ENCODE measurements at regions of chr12 and their contacts with region 1.

Region 1: GRCh38 chr12:131132118-131132892 is 178.6 kb downstream of the ADGRD1 start:
- DNase-seq: no peak
- ATAC-seq: peak; percentile 97
- H3K4me3 ChIP-seq: no peak overlapping the region
- H3K27ac ChIP-seq: no peak overlapping the region
- H3K4me1 ChIP-seq: no peaks in the 10 kb centered on the region
- H3K27me3 ChIP-seq: no peaks in the 10 kb centered on the region
- CTCF ChIP-seq: peak; percentile 81 to 84 (median 83)
- EP300 ChIP-seq: no peak
- POLR2A ChIP-seq: no peak
- RAD21 ChIP-seq: peak; percentile 79

Region 2: GRCh38 chr12:130357241-130357640 is 775.1 kb before region 1 on chr12:
- CTCF ChIA-PET with region 1: no interaction called
- POLR2A ChIA-PET with region 1: no interaction called
- RAD21 ChIA-PET with region 1: no interaction called
- SMC1A ChIA-PET with region 1: no interaction called
- in situ Hi-C with region 1: no loop called
- intact Hi-C with region 1: no loop called
- DNase-seq: no peak
- ATAC-seq: no peak
- H3K4me3 ChIP-seq: no peak overlapping the region
- H3K27ac ChIP-seq: no peak overlapping the region
- H3K4me1 ChIP-seq: no peaks in the 10 kb centered on the region
- H3K27me3 ChIP-seq: no peaks in the 10 kb centered on the region
- CTCF ChIP-seq: no peak
- EP300 ChIP-seq: no peak
- POLR2A ChIP-seq: no peak
- RAD21 ChIP-seq: no peak

Region 3: GRCh38 chr12:130761537-130762318 is 370.6 kb before region 1 on chr12:
- CTCF ChIA-PET with region 1: no interaction called
- POLR2A ChIA-PET with region 1: no interaction called
- RAD21 ChIA-PET with region 1: no interaction called
- SMC1A ChIA-PET with region 1: no interaction called
- in situ Hi-C with region 1: no loop called
- intact Hi-C with region 1: loop called (anchors 5 kb)
- DNase-seq: no peak
- ATAC-seq: peak; percentile 90
- H3K4me3 ChIP-seq: 0 out of 2 replicates have a peak overlapping the region, but pooled peaks have one; percentile 9
- H3K27ac ChIP-seq: no peak overlapping the region
- H3K4me1 ChIP-seq: no peaks in the 10 kb centered on the region; the same call in 1 of the 2 replicates
- H3K27me3 ChIP-seq: no peaks in the 10 kb centered on the region; a peak in 1 of 4 replicates
- CTCF ChIP-seq: peak; percentile 51 to 77 (median 61); a peak in 5 of 6 replicates
- EP300 ChIP-seq: no peak
- POLR2A ChIP-seq: no peak
- RAD21 ChIP-seq: peak; percentile 88

Region 4: DNA sequence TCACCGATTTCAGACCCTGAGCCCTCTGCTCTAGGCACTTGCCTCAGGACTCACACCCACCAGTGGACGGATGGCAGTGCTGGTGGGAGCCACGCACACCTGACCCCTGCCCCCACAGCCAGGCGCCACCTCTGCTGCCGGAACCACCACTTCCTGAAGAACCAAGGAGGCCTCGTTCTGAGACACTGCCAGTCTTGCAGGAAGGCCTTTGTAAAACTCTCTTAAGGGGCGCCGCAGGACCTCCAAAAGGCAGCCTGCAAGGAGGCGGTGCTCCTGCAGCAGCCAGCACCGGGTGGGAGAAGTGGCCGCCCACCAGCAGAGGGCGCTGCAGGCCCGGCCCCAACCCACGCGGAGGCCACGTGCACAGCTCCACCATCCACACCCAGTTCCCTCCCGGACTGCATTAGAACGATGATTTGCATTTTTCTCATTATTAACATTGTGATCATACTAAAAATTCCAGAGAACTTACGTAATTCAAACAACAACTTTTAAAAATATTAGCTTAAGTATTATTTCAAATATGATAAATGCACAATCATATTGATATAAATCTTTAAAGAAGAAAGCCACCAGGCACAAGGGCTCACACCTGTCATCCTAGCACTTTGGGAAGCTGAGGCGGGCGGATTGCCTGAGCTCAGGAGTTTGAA is 306.0 kb before region 1 on chr12:
- CTCF ChIA-PET with region 1: interaction called, 20 read pairs
- POLR2A ChIA-PET with region 1: no interaction called
- RAD21 ChIA-PET with region 1: interaction called, 6 read pairs
- SMC1A ChIA-PET with region 1: interaction called, 8 read pairs
- in situ Hi-C with region 1: no loop called
- intact Hi-C with region 1: loop called (anchors 5 kb)
- DNase-seq: no peak
- ATAC-seq: peak; percentile 95
- H3K4me3 ChIP-seq: no peak overlapping the region
- H3K27ac ChIP-seq: no peak overlapping the region
- H3K4me1 ChIP-seq: no peaks in the 10 kb centered on the region; the same call in 1 of the 2 replicates
- H3K27me3 ChIP-seq: no peaks in the 10 kb centered on the region
- CTCF ChIP-seq: peak; percentile 49 to 81 (median 69)
- EP300 ChIP-seq: no peak
- POLR2A ChIP-seq: no peak
- RAD21 ChIP-seq: peak; percentile 37; the same call in 1 of the 2 replicates

Region 5: DNA sequence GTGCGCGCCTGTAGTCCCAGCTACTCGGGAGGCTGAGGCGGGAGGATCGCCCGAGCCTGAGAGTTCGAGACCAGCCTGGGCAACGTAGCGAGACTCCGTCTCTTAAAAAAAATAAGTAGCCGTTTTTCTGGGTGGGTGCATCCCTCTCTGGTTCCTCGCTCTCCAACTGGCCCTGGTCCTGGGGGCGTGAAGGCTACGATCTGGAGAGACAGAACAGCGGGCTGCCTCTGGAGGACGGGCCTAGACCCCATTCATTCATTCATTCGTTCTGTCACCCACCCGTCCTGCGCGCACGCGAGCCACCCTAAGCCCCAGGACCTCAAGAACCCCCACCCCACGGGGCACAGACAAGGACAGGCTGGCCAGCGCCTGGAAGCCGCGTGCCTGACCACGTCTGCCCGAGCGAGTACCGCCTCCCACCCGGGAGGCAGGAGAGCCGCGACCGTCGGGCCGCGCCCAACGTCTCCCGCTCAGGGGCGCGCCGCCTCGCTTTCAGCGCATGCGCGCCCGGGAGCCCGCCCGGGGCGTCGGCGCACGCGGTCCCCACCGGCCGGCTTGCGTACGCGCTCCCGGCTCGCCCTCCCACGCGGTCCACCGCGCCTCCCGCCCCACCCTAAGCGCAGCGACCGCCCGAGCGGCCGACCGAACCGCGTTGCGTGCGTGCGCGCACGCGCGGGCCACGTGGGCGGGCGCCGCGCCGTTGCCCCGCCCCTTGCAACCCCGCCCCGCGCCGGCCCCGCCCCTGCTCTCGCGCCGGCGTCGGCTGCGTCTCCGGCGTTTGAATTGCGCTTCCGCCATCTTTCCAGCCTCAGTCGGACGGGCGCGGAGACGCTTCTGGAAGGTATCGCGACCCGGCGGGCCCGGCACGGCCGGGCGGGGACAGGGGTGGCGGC is 260.8 kb before region 1 on chr12 and contains the start of gene RAN:
- CTCF ChIA-PET with region 1: interaction called, 8 read pairs
- POLR2A ChIA-PET with region 1: no interaction called
- RAD21 ChIA-PET with region 1: interaction called, 8 read pairs
- SMC1A ChIA-PET with region 1: interaction called, 6 read pairs
- in situ Hi-C with region 1: no loop called
- intact Hi-C with region 1: loop called (anchors 1 kb)
- DNase-seq: peak; percentile 67
- ATAC-seq: peak; percentile 76
- H3K4me3 ChIP-seq: peak within 1 kb of the TSS; percentile 98
- H3K27ac ChIP-seq: peak within 1 kb of the TSS; percentile 93
- H3K4me1 ChIP-seq: peaks cover 7% of the 10 kb centered on the region
- H3K27me3 ChIP-seq: no peaks in the 10 kb centered on the region
- CTCF ChIP-seq: no peak
- EP300 ChIP-seq: no peak
- POLR2A ChIP-seq: peak; percentile 91
- RAD21 ChIP-seq: no peak
- polyA plus RNA-seq, gene RAN: 3,131 to 3,633 TPM

Region 6: GRCh38 chr12:130916251-130916911 is 215.9 kb before region 1 on chr12:
- CTCF ChIA-PET with region 1: interaction called, 26 read pairs
- POLR2A ChIA-PET with region 1: no interaction called
- RAD21 ChIA-PET with region 1: interaction called, 15 read pairs
- SMC1A ChIA-PET with region 1: interaction called, 28 read pairs
- in situ Hi-C with region 1: no loop called
- intact Hi-C with region 1: loop called (anchors 2 kb)
- DNase-seq: peak; percentile 21
- ATAC-seq: peak; percentile 75
- H3K4me3 ChIP-seq: no peak overlapping the region
- H3K27ac ChIP-seq: no peak overlapping the region
- H3K4me1 ChIP-seq: no peaks in the 10 kb centered on the region
- H3K27me3 ChIP-seq: no peaks in the 10 kb centered on the region; a peak in 1 of 4 replicates
- CTCF ChIP-seq: peak; percentile 82 to 91 (median 86)
- EP300 ChIP-seq: no peak
- POLR2A ChIP-seq: no peak
- RAD21 ChIP-seq: peak; percentile 98

Region 7: GRCh38 chr12:131116391-131117117 is 15.8 kb before region 1 on chr12:
- CTCF ChIA-PET with region 1: interaction called, 30 read pairs
- POLR2A ChIA-PET with region 1: no interaction called
- RAD21 ChIA-PET with region 1: interaction called, 13 read pairs
- SMC1A ChIA-PET with region 1: interaction called, 19 read pairs
- in situ Hi-C with region 1: no loop called
- intact Hi-C with region 1: no loop called
- DNase-seq: no peak
- ATAC-seq: peak; percentile 40; the same call in 2 of the 3 replicates
- H3K4me3 ChIP-seq: no peak overlapping the region
- H3K27ac ChIP-seq: no peak overlapping the region
- H3K4me1 ChIP-seq: no peaks in the 10 kb centered on the region
- H3K27me3 ChIP-seq: no peaks in the 10 kb centered on the region
- CTCF ChIP-seq: peak; percentile 31 to 47 (median 40); a peak in 5 of 6 replicates
- EP300 ChIP-seq: no peak
- POLR2A ChIP-seq: no peak
- RAD21 ChIP-seq: peak; percentile 47

Region 8: GRCh38 chr12:131121705-131122405 is 10.4 kb before region 1 on chr12:
- CTCF ChIA-PET with region 1: interaction called, 20 read pairs
- POLR2A ChIA-PET with region 1: no interaction called
- RAD21 ChIA-PET with region 1: interaction called, 5 read pairs
- SMC1A ChIA-PET with region 1: interaction called, 3 read pairs
- in situ Hi-C with region 1: no loop called
- intact Hi-C with region 1: no loop called
- DNase-seq: no peak
- ATAC-seq: no peak
- H3K4me3 ChIP-seq: no peak overlapping the region
- H3K27ac ChIP-seq: no peak overlapping the region
- H3K4me1 ChIP-seq: no peaks in the 10 kb centered on the region
- H3K27me3 ChIP-seq: no peaks in the 10 kb centered on the region
- CTCF ChIP-seq: no peak
- EP300 ChIP-seq: no peak
- POLR2A ChIP-seq: no peak
- RAD21 ChIP-seq: no peak